GM12878 (cell line): ENCODE measurements at regions of chr5 and their contacts with region 1.

Region 1: DNA sequence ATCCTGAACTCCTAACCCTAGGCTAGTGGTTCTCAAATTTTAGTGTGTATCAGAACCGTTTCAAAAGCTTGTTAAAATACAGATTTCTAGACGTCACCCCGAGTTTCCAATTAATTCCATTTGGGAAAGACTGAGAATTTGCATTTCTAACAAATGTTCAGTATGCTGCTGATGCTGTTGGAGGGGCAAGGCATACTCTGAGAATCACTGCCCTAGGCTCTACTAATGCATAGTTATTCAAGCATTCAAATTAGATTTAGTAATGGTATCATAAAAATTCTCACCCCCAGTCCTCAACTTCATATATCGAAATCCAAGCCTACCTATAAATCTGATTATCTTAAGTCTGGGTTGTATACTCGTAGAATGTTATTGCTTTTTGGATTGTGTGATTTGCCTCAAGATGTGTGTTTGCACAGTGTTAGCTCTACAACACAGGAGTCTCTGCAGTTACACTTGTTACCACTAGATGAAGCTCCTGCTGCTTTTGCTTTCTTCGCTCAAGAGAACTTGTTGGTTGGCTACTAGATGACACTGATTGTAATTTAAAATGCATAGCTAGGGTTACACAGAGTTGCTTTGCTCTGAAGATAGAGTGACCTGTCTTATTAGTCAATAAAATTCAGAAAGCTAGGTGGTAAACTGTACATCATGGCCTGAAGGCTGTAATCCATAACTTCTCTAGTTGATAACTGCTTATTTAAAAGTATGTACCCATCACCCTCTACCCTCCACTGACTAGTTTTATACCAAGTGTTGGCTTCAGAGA is 7.5 kb upstream of the ERAP2 start:
- DNase-seq: no peak
- ATAC-seq: peak; percentile 86
- H3K4me3 ChIP-seq: no peak overlapping the region
- H3K27ac ChIP-seq: no peak overlapping the region
- H3K4me1 ChIP-seq: peaks cover 28% of the 10 kb centered on the region
- H3K27me3 ChIP-seq: no peaks in the 10 kb centered on the region
- CTCF ChIP-seq: peak; percentile 99 to 100 (median 100); a peak in 5 of 6 replicates
- EP300 ChIP-seq: no peak
- POLR2A ChIP-seq: no peak
- RAD21 ChIP-seq: peak; percentile 100

Region 2: GRCh38 chr5:96822686-96823459 is 45.9 kb before region 1 on chr5:
- CTCF ChIA-PET with region 1: interaction called, 14 read pairs
- POLR2A ChIA-PET with region 1: no interaction called
- RAD21 ChIA-PET with region 1: interaction called, 5 read pairs
- SMC1A ChIA-PET with region 1: interaction called, 17 read pairs
- in situ Hi-C with region 1: no loop called
- intact Hi-C with region 1: no loop called
- DNase-seq: no peak
- ATAC-seq: no peak; the same call in 2 of the 3 replicates
- H3K4me3 ChIP-seq: no peak overlapping the region
- H3K27ac ChIP-seq: no peak overlapping the region
- H3K4me1 ChIP-seq: no peaks in the 10 kb centered on the region
- H3K27me3 ChIP-seq: no peaks in the 10 kb centered on the region
- CTCF ChIP-seq: peak in 1 of 3 experiments; percentile 5; a peak in 1 of 6 replicates
- EP300 ChIP-seq: no peak
- POLR2A ChIP-seq: no peak
- RAD21 ChIP-seq: no peak

Region 3: DNA sequence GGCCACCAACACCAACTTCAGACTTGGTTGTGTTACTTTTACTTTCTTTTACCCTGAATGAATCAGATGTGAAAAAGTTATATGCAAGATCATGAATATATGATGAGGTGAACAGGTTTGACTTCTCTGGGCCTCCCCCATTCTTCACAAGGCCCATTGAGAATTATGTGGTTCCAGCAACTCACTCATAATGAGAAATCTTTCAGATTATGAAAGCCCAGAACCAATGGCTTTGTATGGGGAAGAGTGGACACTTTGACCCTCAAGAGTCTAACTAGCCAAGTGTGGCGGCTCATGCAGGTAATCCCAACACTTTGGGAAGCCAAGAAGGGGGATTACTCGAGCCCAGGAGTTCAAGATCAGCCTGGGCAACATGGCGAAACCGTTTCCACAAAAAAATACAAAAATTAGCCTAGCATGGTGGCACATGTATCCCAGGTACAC is 51.0 kb after region 1 on chr5:
- CTCF ChIA-PET with region 1: interaction called, 21 read pairs
- POLR2A ChIA-PET with region 1: interaction called, 3 read pairs
- RAD21 ChIA-PET with region 1: interaction called, 9 read pairs
- SMC1A ChIA-PET with region 1: interaction called, 47 read pairs
- in situ Hi-C with region 1: no loop called
- intact Hi-C with region 1: no loop called
- DNase-seq: no peak
- ATAC-seq: peak; percentile 85
- H3K4me3 ChIP-seq: no peak overlapping the region
- H3K27ac ChIP-seq: peak overlapping the region; percentile 98
- H3K4me1 ChIP-seq: peaks cover 42% of the 10 kb centered on the region
- H3K27me3 ChIP-seq: no peaks in the 10 kb centered on the region
- CTCF ChIP-seq: no peak
- EP300 ChIP-seq: no peak; a peak in 1 of 4 replicates
- POLR2A ChIP-seq: no peak
- RAD21 ChIP-seq: 0 out of 2 replicates have a peak, but pooled peaks have one; percentile 2

Region 4: DNA sequence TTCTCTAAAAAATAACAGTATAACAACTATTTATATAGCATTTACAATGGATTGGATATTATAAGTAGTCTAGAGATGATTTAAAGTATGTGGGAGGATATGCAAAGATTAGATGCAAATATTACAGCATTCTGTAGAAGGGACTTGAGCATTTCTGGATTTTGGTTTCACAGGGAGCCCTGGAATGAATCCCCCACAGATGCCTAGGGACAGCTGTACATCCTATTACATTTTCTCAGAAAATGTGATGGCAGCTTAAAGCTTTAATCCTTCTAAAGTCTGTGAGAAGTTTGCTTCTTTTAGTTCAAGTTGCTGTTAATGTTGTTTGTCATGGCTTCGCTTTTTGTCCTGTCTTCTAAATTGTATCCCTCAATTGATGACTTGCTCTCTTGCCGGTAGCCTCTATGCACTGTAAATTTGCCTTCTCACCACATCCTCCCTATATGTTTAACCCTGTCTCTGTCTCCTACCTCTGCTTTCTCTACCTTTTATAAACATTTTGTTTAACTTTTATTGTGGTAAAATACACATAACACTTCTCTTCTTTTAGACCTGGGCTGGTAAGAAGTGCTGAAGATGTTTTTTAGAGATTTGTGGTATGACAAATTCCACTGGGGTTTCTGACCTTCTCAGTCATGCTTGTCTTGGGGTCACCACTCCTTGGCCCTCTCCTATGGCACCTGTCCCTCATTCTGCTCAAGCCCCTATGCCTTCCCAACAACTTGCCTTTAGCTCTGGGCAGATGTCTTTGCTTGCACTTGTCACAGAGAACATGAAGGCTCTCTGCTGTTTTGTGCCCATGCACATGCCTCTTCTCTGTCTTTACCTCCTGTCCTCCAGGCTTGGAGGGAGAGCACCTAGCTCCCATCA is 105.0 kb after region 1 on chr5:
- CTCF ChIA-PET with region 1: interaction called, 23 read pairs
- POLR2A ChIA-PET with region 1: interaction called, 3 read pairs
- RAD21 ChIA-PET with region 1: interaction called, 9 read pairs
- SMC1A ChIA-PET with region 1: interaction called, 15 read pairs
- in situ Hi-C with region 1: no loop called
- intact Hi-C with region 1: no loop called
- DNase-seq: no peak
- ATAC-seq: peak; percentile 29
- H3K4me3 ChIP-seq: no peak overlapping the region
- H3K27ac ChIP-seq: no peak overlapping the region
- H3K4me1 ChIP-seq: peaks cover 15% of the 10 kb centered on the region
- H3K27me3 ChIP-seq: no peaks in the 10 kb centered on the region
- CTCF ChIP-seq: no peak
- EP300 ChIP-seq: no peak
- POLR2A ChIP-seq: no peak
- RAD21 ChIP-seq: no peak

Region 5: GRCh38 chr5:97002983-97003382 is 134.2 kb after region 1 on chr5:
- CTCF ChIA-PET with region 1: interaction called, 109 read pairs
- POLR2A ChIA-PET with region 1: no interaction called
- RAD21 ChIA-PET with region 1: interaction called, 52 read pairs
- SMC1A ChIA-PET with region 1: interaction called, 104 read pairs
- in situ Hi-C with region 1: no loop called
- intact Hi-C with region 1: loop called (anchors 2 kb)
- DNase-seq: no peak
- ATAC-seq: no peak
- H3K4me3 ChIP-seq: no peak overlapping the region
- H3K27ac ChIP-seq: no peak overlapping the region
- H3K4me1 ChIP-seq: no peaks in the 10 kb centered on the region
- H3K27me3 ChIP-seq: no peaks in the 10 kb centered on the region
- CTCF ChIP-seq: no peak
- EP300 ChIP-seq: no peak
- POLR2A ChIP-seq: no peak
- RAD21 ChIP-seq: no peak

Region 6: DNA sequence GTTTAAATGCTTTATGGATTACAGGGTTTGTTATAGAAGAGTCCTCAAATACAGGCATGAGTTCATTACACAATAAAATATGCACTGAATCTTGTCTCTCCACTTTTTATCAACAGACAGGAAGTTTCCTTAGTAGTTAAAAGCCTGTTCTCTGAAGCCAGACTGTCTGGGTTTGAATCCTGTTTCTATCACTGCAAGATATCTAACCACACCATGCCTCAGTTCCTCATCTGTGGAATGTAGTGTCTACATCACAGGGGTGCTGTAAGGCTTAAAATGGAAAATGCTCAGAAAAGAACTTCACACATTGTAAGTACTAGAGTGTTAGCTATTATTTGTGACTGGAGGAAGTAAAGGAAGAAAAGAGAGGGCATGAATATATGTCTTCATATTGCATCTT is 264.3 kb after region 1 on chr5:
- CTCF ChIA-PET with region 1: interaction called, 165 read pairs
- POLR2A ChIA-PET with region 1: no interaction called
- RAD21 ChIA-PET with region 1: interaction called, 6 read pairs
- SMC1A ChIA-PET with region 1: interaction called, 23 read pairs
- in situ Hi-C with region 1: no loop called
- intact Hi-C with region 1: no loop called
- DNase-seq: no peak
- ATAC-seq: no peak
- H3K4me3 ChIP-seq: no peak overlapping the region
- H3K27ac ChIP-seq: no peak overlapping the region
- H3K4me1 ChIP-seq: no peaks in the 10 kb centered on the region
- H3K27me3 ChIP-seq: no peaks in the 10 kb centered on the region
- CTCF ChIP-seq: no peak
- EP300 ChIP-seq: no peak
- POLR2A ChIP-seq: no peak
- RAD21 ChIP-seq: no peak